ENCODE measurements at regions of chr7 and their contacts with region 1.

Region 1: GRCh38 chr7:1137510-1138167 is 22.4 kb downstream of the ZFAND2A start:
- DNase-seq: no peak
- ATAC-seq: peak; percentile 64
- H3K4me3 ChIP-seq: peak overlapping the region; percentile 21 to 96 (median 75)
- H3K4me3 Mint-ChIP-seq: peak overlapping the region; percentile 89
- H3K27ac ChIP-seq: peak overlapping the region; percentile 73 to 91
- H3K27ac Mint-ChIP-seq: peak overlapping the region; percentile 92
- H3K4me1 ChIP-seq: peaks cover 28 to 37% of the 10 kb centered on the region in 2 donors
- H3K4me1 Mint-ChIP-seq: peaks cover 43% of the 10 kb centered on the region
- H3K27me3 ChIP-seq: no peaks in the 10 kb centered on the region
- H3K27me3 Mint-ChIP-seq: no peaks in the 10 kb centered on the region
- CTCF ChIP-seq: no peak

Region 2: GRCh38 chr7:1020849-1021251 is 116.8 kb before region 1 on chr7:
- CTCF ChIA-PET with region 1: no interaction called
- POLR2A ChIA-PET with region 1: interaction called, 14 read pairs
- intact Hi-C with region 1: loop called (anchors 1 kb)
- DNase-seq: peak; percentile 49
- ATAC-seq: no peak
- H3K4me3 ChIP-seq: no peak overlapping the region
- H3K4me3 Mint-ChIP-seq: no peak overlapping the region
- H3K27ac ChIP-seq: no peak overlapping the region
- H3K27ac Mint-ChIP-seq: no peak overlapping the region
- H3K4me1 ChIP-seq: peaks cover 50 to 62% of the 10 kb centered on the region in 2 donors
- H3K4me1 Mint-ChIP-seq: peaks cover 67% of the 10 kb centered on the region
- H3K27me3 ChIP-seq: peaks cover 0 to 2% (median 0%) of the 10 kb centered on the region in 4 experiments
- H3K27me3 Mint-ChIP-seq: no peaks in the 10 kb centered on the region
- CTCF ChIP-seq: peak; percentile 48

Region 3: GRCh38 chr7:1159891-1160668 is 22.4 kb after region 1 on chr7 and contains the start of gene ZFAND2A:
- CTCF ChIA-PET with region 1: interaction called, 4 read pairs
- POLR2A ChIA-PET with region 1: no interaction called
- intact Hi-C with region 1: loop called (anchors 1 kb)
- DNase-seq: peak; percentile 98
- ATAC-seq: peak; percentile 97
- H3K4me3 ChIP-seq: peak within 1 kb of the TSS; percentile 79 to 99 (median 94)
- H3K4me3 Mint-ChIP-seq: peak within 1 kb of the TSS; percentile 87
- H3K27ac ChIP-seq: peak within 1 kb of the TSS; percentile 89 to 90
- H3K27ac Mint-ChIP-seq: peak within 1 kb of the TSS; percentile 90
- H3K4me1 ChIP-seq: peaks cover 16 to 22% of the 10 kb centered on the region in 2 donors
- H3K4me1 Mint-ChIP-seq: peaks cover 24% of the 10 kb centered on the region
- H3K27me3 ChIP-seq: no peaks in the 10 kb centered on the region
- H3K27me3 Mint-ChIP-seq: no peaks in the 10 kb centered on the region
- CTCF ChIP-seq: no peak
- total RNA-seq, gene ZFAND2A: 26.7 and 27.3 TPM in 2 replicates